Panc1 (cell line): ENCODE measurements at regions of chr9 and their contacts with region 1.

Region 1: DNA sequence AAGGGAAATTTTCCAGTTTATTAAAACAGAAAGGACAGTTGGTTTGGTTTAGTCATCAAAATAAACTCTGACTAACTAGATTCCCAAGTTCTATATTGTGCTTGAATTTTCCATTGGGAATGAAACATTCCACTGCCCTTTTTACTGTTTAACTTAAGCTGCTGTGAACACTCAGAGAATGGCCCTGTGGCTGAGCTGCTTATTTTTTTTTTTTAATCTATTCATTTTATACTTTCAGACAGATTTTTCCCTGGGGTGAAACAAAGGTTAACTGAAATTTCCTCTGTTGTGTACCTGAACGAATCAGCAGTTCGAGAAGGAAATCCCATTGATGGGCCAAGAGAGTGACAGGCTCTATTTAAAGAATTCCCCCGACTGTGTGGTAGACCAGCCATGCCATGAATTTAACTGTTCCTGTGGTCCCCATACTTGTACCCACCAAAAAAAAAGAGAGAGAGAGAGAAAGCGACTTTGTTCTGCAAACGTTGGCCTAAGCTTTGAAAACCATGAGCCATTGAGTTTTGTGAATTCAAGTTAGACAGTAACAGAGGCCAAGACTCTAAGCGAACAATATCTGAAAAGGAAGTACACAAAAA is 138.7 kb upstream of the GRHPR start:
- DNase-seq: peak; percentile 36
- ATAC-seq: peak; percentile 81
- H3K4me3 ChIP-seq: no peak overlapping the region
- H3K27ac ChIP-seq: peak overlapping the region; percentile 12; the same call in 1 of the 2 replicates
- H3K4me1 ChIP-seq: peaks cover 18% of the 10 kb centered on the region
- H3K27me3 ChIP-seq: no peaks in the 10 kb centered on the region
- CTCF ChIP-seq: no peak

Region 2: GRCh38 chr9:36772450-36773403 is 511.1 kb before region 1 on chr9:
- CTCF ChIA-PET with region 1: no interaction called
- POLR2A ChIA-PET with region 1: no interaction called
- in situ Hi-C with region 1: no loop called
- intact Hi-C with region 1: no loop called
- DNase-seq: no peak
- ATAC-seq: peak; percentile 21
- H3K4me3 ChIP-seq: no peak overlapping the region
- H3K27ac ChIP-seq: no peak overlapping the region
- H3K4me1 ChIP-seq: 0 out of 2 replicates have a peak, but pooled peaks cover 3% of the 10 kb centered on the region
- H3K27me3 ChIP-seq: peaks cover 65% of the 10 kb centered on the region
- CTCF ChIP-seq: no peak

Region 3: GRCh38 chr9:37255944-37256862 is 27.6 kb before region 1 on chr9:
- CTCF ChIA-PET with region 1: no interaction called
- POLR2A ChIA-PET with region 1: no interaction called
- in situ Hi-C with region 1: no loop called
- intact Hi-C with region 1: no loop called
- DNase-seq: no peak
- ATAC-seq: no peak
- H3K4me3 ChIP-seq: no peak overlapping the region
- H3K27ac ChIP-seq: no peak overlapping the region
- H3K4me1 ChIP-seq: peaks cover 4% of the 10 kb centered on the region; the same call in 1 of the 2 replicates
- H3K27me3 ChIP-seq: no peaks in the 10 kb centered on the region
- CTCF ChIP-seq: no peak

Region 4: DNA sequence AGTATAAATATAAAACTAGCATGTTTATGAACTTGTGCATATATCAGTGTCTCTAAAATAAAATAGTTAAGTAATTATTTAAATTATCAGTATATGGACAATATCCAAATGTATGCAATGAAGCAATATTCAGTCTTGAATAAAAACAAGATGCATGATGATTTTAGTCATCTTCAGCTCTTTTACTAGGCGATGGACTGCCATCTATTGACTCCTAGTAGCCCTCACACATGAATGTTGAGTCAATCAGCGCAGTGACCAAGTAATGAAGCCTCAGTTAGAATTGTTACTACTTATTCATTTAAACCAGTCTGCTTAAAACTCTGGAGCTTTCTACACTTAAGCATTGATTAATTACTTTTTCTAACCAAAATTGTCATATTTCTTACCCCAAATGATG is 45.7 kb after region 1 on chr9:
- CTCF ChIA-PET with region 1: no interaction called
- POLR2A ChIA-PET with region 1: interaction called, 3 read pairs
- in situ Hi-C with region 1: no loop called
- intact Hi-C with region 1: loop called (anchors 5 kb)
- DNase-seq: peak; percentile 20
- ATAC-seq: peak; percentile 84
- H3K4me3 ChIP-seq: no peak overlapping the region
- H3K27ac ChIP-seq: no peak overlapping the region
- H3K4me1 ChIP-seq: peaks cover 5% of the 10 kb centered on the region; the same call in 1 of the 2 replicates
- H3K27me3 ChIP-seq: no peaks in the 10 kb centered on the region
- CTCF ChIP-seq: peak; percentile 67; the same call in 1 of the 2 replicates